Heart left ventricle (tissue), 16 donors: ENCODE measurements at regions of chr1 and their contacts with region 1.

Region 1: GRCh38 chr1:115706587-115707425 is 61.7 kb downstream of the CASQ2 start:
- DNase-seq: no peak
- ATAC-seq: peak; percentile 10 to 43 (median 14)
- H3K4me3 ChIP-seq: no peak overlapping the region
- H3K27ac ChIP-seq: peak overlapping the region in 1 of 12 donors; percentile 61
- H3K4me1 ChIP-seq: peaks cover 0 to 73% (median 22%) of the 10 kb centered on the region in 12 donors
- H3K27me3 ChIP-seq: peaks cover 0 to 3% (median 0%) of the 10 kb centered on the region in 9 donors
- CTCF ChIP-seq: peak; percentile 53 to 83 (median 73)
- POLR2A ChIP-seq: no peak

Region 2: DNA sequence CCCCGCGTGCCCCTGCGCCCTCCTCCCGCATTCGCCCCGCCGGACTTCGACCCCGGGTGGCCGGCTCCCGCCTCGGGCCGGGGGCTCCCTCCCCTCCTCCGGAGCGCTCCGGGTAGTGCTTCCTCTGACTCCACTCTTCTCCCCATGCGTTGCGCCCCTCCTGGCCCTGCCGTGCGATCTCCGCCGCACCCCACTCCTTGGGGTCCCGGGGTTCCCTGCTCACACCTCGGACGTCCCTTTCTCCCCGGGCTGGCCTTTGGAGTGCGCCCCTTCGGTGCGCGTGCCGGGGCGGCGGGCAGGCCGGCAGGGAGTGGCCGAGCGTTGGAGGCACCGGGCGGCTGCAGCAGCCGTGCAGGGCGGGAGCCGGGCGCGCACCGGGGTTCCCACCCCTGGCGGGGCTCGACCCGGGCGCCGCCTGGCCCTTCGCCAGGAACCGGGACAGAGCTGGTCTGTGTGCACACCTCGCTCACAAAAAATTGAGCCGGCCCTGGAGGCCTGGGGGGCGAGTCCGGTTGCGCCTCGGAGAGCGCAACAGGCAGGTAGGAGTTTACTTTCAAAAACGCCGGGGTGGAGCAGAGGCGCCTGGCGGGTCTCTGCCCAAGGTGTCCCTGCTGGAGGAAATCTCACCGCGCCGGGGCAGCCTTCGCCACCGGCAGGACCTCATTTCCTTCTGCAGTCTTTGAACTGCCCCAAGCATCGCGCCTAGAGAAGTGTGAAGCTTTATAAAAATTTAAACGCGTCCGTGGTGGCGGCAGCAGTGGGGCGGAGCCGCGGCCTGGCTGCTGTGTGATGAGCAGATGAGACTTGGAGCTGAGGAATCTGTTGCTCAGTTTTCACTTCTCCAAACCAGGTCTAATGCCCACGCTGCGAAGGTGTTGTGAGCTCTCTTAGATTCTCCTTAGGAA is 64.4 kb before region 1 on chr1:
- intact Hi-C with region 1: loop called in 7 of 10 experiments (anchors 2 to 10 kb)
- DNase-seq: peak; percentile 35 to 72 (median 42)
- ATAC-seq: peak; percentile 44 to 74 (median 74)
- H3K4me3 ChIP-seq: peak overlapping the region; percentile 78 to 96 (median 90)
- H3K27ac ChIP-seq: peak overlapping the region in 11 of 12 donors; percentile 58 to 88 (median 76)
- H3K4me1 ChIP-seq: peaks cover 0 to 37% (median 19%) of the 10 kb centered on the region in 12 donors
- H3K27me3 ChIP-seq: no peaks in the 10 kb centered on the region
- CTCF ChIP-seq: peak in 7 of 12 donors; percentile 8 to 37 (median 16)
- POLR2A ChIP-seq: no peak